Activated T-helper 1 cell treated with anti-CD3 and anti-CD28 coated beads, Interleukin-12 subunit alpha, Interleukin-12 subunit beta, Interleukin-2, Interleukin-4 antibody, amounts not matched to agents 30 ng/mL and 10 ng/mL and 1 ng/mL, durations not matched to agents 14 hours and 24 hours and 36 hours (primary cell): ENCODE measurements at regions of chr6 and their contacts with region 1.

Region 1: GRCh38 chr6:29887819-29888776 is 54.2 kb upstream of the HLA-A start:
- DNase-seq: peak; percentile 83
- H3K4me3 Mint-ChIP-seq: peak overlapping the region; percentile 87
- H3K27ac Mint-ChIP-seq: peak overlapping the region; percentile 93
- H3K4me1 Mint-ChIP-seq: peaks cover 17% of the 10 kb centered on the region
- H3K27me3 Mint-ChIP-seq: peaks cover 9% of the 10 kb centered on the region

Region 2: GRCh38 chr6:29926413-29927274 is 38.5 kb after region 1 on chr6:
- intact Hi-C with region 1: loop called (anchors 1 kb)
- DNase-seq: peak; percentile 79
- H3K4me3 Mint-ChIP-seq: peak overlapping the region; percentile 92
- H3K27ac Mint-ChIP-seq: peak overlapping the region; percentile 98
- H3K4me1 Mint-ChIP-seq: peaks cover 51% of the 10 kb centered on the region
- H3K27me3 Mint-ChIP-seq: peaks cover 4% of the 10 kb centered on the region

Region 3: GRCh38 chr6:30113003-30113759 is 225.1 kb after region 1 on chr6 and contains the start of gene TRIM31:
- intact Hi-C with region 1: no loop called
- DNase-seq: no peak
- H3K4me3 Mint-ChIP-seq: no peak within 1 kb of the TSS
- H3K27ac Mint-ChIP-seq: no peak within 1 kb of the TSS
- H3K4me1 Mint-ChIP-seq: peaks cover 15% of the 10 kb centered on the region
- H3K27me3 Mint-ChIP-seq: peaks cover 51% of the 10 kb centered on the region
- total RNA-seq, gene TRIM31: not detected in 2 replicates